A549 (cell line): ENCODE measurements at regions of chr6 and their contacts with region 1.

Region 1: DNA sequence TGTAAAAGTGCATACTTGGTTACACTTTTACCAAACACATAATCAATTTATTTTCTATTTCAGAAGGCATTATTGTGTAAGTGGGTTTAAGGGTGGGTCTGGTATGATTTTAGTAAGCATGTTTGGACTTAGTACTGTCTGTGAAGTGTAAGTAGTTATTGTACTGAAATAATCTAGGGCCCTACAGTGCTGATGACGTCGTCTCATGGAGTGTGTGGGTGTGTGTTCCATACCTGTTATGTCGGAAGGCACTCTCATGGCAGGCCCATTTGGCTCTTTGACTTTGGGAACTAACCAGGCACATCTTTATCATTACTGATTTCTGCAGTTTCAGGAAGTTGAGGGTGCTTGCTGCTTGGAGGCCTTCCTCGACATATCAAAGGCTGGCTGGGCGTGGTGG is 155.1 kb downstream of the SASH1 start:
- DNase-seq: no peak
- ATAC-seq: no peak
- H3K4me3 ChIP-seq: no peak overlapping the region
- H3K27ac ChIP-seq: no peak overlapping the region
- H3K4me1 ChIP-seq: no peaks in the 10 kb centered on the region
- CTCF ChIP-seq: no peak
- EP300 ChIP-seq: no peak
- POLR2A ChIP-seq: no peak
- RAD21 ChIP-seq: no peak

Region 2: DNA sequence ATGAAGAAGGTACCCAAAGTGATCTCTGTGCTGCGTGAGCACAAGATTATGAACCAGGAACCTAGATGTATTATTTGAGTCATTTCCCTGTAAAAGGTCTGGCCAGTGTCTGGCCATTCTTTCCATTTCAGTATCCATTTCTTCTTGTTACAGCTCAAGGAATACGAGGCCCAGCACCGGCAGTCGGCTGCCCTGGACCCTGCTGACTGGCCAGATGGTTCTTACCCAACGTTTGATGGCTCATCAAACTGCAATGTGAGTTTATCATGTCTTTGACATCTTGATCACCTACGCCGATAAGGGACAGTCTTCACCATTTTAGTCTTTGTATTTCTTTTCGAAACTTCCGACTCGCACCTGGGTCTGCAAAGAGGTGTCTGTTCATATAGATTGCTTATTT is 10.3 kb before region 1 on chr6:
- CTCF ChIA-PET with region 1: no interaction called
- POLR2A ChIA-PET with region 1: no interaction called
- DNase-seq: no peak
- ATAC-seq: no peak
- H3K4me3 ChIP-seq: no peak overlapping the region
- H3K27ac ChIP-seq: no peak overlapping the region
- H3K4me1 ChIP-seq: no peaks in the 10 kb centered on the region
- CTCF ChIP-seq: no peak
- EP300 ChIP-seq: no peak
- POLR2A ChIP-seq: no peak
- RAD21 ChIP-seq: no peak

Region 3: DNA sequence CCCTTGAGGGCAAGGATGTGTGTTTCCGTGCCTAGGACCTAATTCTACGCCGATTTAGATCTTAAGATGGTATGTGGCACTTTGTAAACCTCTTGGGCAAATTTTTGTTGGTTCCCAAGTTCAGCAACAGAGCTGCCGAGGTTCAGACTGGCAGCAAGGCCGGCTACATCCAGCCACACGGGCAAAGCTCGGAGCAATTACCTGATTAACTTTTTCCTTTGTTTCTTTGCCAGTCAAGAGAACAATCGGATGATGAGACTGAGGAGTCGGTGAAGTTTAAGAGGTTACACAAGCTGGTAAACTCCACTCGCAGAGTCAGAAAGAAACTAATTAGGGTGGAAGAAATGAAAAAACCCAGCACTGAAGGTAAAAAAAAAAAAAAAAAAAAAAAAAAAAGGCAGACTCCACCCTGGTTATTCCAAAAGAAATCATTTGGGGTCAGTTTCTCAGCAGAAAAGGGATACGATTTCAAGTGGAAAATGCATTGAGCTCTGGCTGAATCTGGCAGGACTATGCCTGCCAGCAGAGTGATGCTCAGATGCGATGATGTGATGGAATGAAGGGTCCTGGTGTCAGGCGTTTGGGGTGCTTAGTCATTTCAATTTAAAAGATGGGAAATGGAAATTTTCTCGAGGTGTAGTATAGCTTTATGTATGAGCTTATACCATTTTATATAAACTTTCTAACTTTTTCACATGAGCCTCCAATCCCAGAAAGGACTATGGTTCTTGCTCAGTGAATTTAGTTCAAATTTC is 16.6 kb after region 1 on chr6:
- CTCF ChIA-PET with region 1: no interaction called
- POLR2A ChIA-PET with region 1: interaction called, 14 read pairs
- DNase-seq: no peak
- ATAC-seq: no peak
- H3K4me3 ChIP-seq: no peak overlapping the region
- H3K27ac ChIP-seq: no peak overlapping the region
- H3K4me1 ChIP-seq: no peaks in the 10 kb centered on the region
- CTCF ChIP-seq: no peak
- EP300 ChIP-seq: no peak
- POLR2A ChIP-seq: no peak
- RAD21 ChIP-seq: no peak